CD8-positive, alpha-beta T cell (primary cell): ENCODE measurements at regions of chr17 and their contacts with region 1.

Region 1: GRCh38 chr17:78128551-78129350 is at the start of gene TMC6:
- DNase-seq: peak; percentile 52 to 91 (median 82)
- ATAC-seq: peak; percentile 25
- H3K4me3 ChIP-seq: peak within 1 kb of the TSS; percentile 95 to 97
- H3K4me3 Mint-ChIP-seq: peak within 1 kb of the TSS; percentile 92
- H3K27ac ChIP-seq: peak within 1 kb of the TSS; percentile 74 to 80
- H3K27ac Mint-ChIP-seq: peak within 1 kb of the TSS; percentile 98
- H3K4me1 ChIP-seq: peaks cover 59% of the 10 kb centered on the region
- H3K4me1 Mint-ChIP-seq: peaks cover 53% of the 10 kb centered on the region
- H3K27me3 ChIP-seq: no peaks in the 10 kb centered on the region
- H3K27me3 Mint-ChIP-seq: no peaks in the 10 kb centered on the region
- CTCF ChIP-seq: no peak
- total RNA-seq, gene TMC6: 518 to 535 TPM

Region 2: GRCh38 chr17:77451245-77451893 is 677.4 kb before region 1 on chr17:
- CTCF ChIA-PET with region 1: no interaction called
- POLR2A ChIA-PET with region 1: interaction called, 4 read pairs
- intact Hi-C with region 1: loop called (anchors 5 kb)
- DNase-seq: peak; percentile 36 to 86 (median 73)
- ATAC-seq: peak; percentile 25
- H3K4me3 ChIP-seq: peak overlapping the region; percentile 93 to 99
- H3K4me3 Mint-ChIP-seq: peak overlapping the region; percentile 94
- H3K27ac ChIP-seq: peak overlapping the region; percentile 80 to 86
- H3K27ac Mint-ChIP-seq: peak overlapping the region; percentile 100
- H3K4me1 ChIP-seq: peaks cover 54% of the 10 kb centered on the region
- H3K4me1 Mint-ChIP-seq: peaks cover 50% of the 10 kb centered on the region
- H3K27me3 ChIP-seq: no peaks in the 10 kb centered on the region
- H3K27me3 Mint-ChIP-seq: no peaks in the 10 kb centered on the region
- CTCF ChIP-seq: no peak

Region 3: DNA sequence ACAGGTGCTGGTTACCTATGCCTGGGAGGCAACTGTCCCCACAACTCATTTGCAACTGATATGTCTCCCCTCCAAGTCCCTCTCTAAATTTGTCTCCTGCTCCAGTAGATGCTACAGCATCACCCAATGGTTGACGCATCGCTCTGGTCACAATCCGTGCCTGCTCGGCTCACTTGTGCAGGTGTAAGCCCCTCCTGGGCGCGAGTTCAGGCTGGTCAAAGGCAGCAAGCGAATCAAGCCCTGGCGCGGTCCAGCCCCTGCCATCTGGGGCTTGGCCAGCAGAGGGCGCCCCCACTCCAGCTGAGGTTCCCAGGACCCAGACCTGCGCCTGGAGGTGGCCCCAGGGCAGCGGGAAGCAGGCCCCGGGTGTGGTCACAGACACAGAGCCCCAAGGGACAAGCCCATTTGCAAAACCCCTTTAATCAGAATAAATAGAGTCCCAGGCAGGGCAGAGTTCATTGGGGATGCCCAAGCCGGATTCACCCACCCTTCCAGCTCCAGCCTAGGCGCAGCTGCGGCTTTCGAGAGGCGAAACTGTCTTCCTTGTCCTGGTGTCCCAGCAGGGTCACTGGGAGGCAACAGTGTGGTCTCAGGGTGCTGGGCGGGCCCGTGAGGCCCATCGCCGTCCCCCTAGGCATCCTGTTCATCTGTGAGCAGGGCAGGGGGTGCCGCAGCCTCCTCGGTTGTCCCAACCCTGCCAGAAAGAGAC is 16.1 kb before region 1 on chr17:
- CTCF ChIA-PET with region 1: interaction called, 200 read pairs
- POLR2A ChIA-PET with region 1: interaction called, 583 read pairs
- intact Hi-C with region 1: no loop called
- DNase-seq: peak; percentile 62 to 91 (median 78)
- ATAC-seq: peak; percentile 67
- H3K4me3 ChIP-seq: no peak overlapping the region
- H3K4me3 Mint-ChIP-seq: peak overlapping the region; percentile 42
- H3K27ac ChIP-seq: peak overlapping the region in 1 of 2 experiments; percentile 74
- H3K27ac Mint-ChIP-seq: peak overlapping the region; percentile 90
- H3K4me1 ChIP-seq: peaks cover 45% of the 10 kb centered on the region
- H3K4me1 Mint-ChIP-seq: peaks cover 42% of the 10 kb centered on the region
- H3K27me3 ChIP-seq: no peaks in the 10 kb centered on the region
- H3K27me3 Mint-ChIP-seq: no peaks in the 10 kb centered on the region
- CTCF ChIP-seq: peak; percentile 99

Region 4: DNA sequence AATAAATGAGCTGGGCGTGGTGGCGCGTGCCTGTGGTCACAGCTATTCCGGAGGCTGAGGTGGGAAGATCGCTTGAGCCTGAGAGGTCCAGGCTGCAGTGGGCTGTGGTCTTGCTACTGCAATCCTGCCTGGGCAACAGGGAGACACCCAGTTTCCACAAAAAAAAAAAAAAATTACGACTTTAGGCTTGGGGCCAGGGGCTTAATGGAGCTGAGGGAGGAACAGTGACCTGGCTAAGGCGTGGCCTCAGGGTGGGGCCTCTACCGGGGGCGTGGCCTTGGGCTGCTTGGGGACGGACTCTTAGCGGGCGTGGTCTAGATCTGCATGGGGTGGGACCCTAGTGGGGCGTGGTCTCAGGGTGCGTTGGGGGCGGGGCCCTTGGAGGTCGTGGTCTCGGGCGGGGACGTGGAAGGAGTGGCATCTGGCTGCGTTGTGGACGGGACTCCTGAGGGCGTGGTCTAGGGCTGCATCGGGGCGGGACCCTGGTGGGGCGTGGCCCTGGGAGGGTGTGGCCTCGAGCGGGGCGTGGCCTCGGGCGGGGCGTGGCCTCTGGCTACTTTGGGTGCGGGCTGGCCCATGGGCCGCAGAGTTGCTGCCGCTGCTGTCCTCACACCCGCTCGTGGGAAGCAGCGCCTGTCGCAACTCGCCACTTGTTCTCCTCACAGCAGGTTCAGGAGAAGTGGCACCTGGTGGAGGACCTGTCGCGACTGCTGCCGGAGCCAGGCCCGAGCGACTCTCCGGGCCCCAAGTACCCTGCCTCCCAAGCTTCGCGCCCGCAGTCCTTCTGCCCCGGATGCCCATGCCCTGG is 11.6 kb after region 1 on chr17:
- CTCF ChIA-PET with region 1: interaction called, 200 read pairs
- POLR2A ChIA-PET with region 1: interaction called, 583 read pairs
- intact Hi-C with region 1: loop called in 1 of 2 experiments (anchors 1 kb)
- DNase-seq: peak; percentile 83 to 96 (median 93)
- ATAC-seq: peak; percentile 88
- H3K4me3 ChIP-seq: peak overlapping the region in 1 of 2 experiments; percentile 20
- H3K4me3 Mint-ChIP-seq: peak overlapping the region; percentile 61
- H3K27ac ChIP-seq: peak overlapping the region; percentile 16 to 51
- H3K27ac Mint-ChIP-seq: peak overlapping the region; percentile 91
- H3K4me1 ChIP-seq: peaks cover 81% of the 10 kb centered on the region
- H3K4me1 Mint-ChIP-seq: peaks cover 70% of the 10 kb centered on the region
- H3K27me3 ChIP-seq: no peaks in the 10 kb centered on the region
- H3K27me3 Mint-ChIP-seq: no peaks in the 10 kb centered on the region
- CTCF ChIP-seq: no peak

Region 5: GRCh38 chr17:79803997-79804855 is 1675.5 kb after region 1 on chr17:
- CTCF ChIA-PET with region 1: no interaction called
- POLR2A ChIA-PET with region 1: no interaction called
- intact Hi-C with region 1: loop called in 1 of 2 experiments (anchors 5 kb)
- DNase-seq: peak in 3 of 9 experiments; percentile 49 to 67 (median 52)
- ATAC-seq: peak; percentile 47
- H3K4me3 ChIP-seq: no peak overlapping the region
- H3K4me3 Mint-ChIP-seq: peak overlapping the region; percentile 66
- H3K27ac ChIP-seq: no peak overlapping the region
- H3K27ac Mint-ChIP-seq: no peak overlapping the region
- H3K4me1 ChIP-seq: peaks cover 51% of the 10 kb centered on the region
- H3K4me1 Mint-ChIP-seq: peaks cover 44% of the 10 kb centered on the region
- H3K27me3 ChIP-seq: peaks cover 96% of the 10 kb centered on the region in 2 experiments
- H3K27me3 Mint-ChIP-seq: peaks cover 79% of the 10 kb centered on the region
- CTCF ChIP-seq: no peak